ENCODE measurements at regions of chr10 and their contacts with region 1.

Region 1: DNA sequence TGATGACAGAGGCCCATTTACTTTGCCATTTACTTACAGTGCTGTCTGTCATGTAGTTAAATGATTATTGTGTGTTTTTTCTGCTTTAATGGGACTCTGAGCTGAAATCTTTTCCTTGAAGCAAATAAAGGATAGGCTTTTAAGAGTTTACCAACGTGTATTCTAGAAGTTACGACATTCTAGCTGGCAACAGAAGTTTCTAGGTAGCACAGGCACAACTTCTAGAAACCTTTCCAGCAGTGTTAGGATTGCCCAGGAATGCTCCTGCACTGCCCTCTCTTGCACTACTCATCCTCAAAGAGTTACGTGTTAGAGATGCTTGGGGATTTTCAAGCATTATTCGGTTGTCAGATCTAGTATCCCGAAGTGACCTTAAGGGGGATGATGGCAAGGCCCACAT is 42.5 kb upstream of the TMEM236 start:
- DNase-seq: no peak
- H3K4me3 ChIP-seq: no peak overlapping the region
- CTCF ChIP-seq: no peak

Region 2: GRCh38 chr10:17038627-17039026 is 670.9 kb before region 1 on chr10:
- in situ Hi-C with region 1: no loop called
- DNase-seq: no peak
- H3K4me3 ChIP-seq: no peak overlapping the region
- CTCF ChIP-seq: no peak

Region 3: DNA sequence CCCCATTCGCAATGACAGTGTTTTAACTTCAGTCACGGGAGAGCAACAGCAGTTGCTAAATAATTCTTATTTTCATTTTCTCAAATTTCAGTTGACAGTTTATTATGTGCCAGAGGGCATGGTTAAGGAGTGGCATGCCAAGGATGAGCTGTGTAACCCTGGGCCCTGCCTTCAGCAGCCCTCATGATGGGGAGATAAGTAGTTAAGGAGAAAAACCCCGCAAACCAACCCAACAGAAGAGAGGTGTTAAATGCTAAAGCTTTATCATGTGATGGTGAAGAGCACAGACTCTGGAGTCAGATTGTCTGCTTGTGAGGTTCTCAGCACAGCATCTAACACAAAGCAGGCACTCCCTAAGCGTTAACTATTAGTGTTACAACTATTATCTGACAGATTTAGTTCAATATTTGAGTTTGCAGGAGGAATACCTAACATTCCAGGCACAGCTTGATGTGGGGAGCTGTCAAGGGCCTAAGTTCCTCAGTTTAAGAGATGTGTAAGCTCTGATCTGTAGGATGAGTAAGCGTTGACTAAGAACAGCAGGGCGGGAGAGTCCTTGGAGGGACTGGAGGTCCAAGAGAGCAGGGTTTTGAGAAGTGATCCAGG is 35.9 kb before region 1 on chr10:
- in situ Hi-C with region 1: loop called (anchors 5 kb)
- DNase-seq: peak; percentile 90
- H3K4me3 ChIP-seq: no peak overlapping the region
- CTCF ChIP-seq: no peak

Region 4: DNA sequence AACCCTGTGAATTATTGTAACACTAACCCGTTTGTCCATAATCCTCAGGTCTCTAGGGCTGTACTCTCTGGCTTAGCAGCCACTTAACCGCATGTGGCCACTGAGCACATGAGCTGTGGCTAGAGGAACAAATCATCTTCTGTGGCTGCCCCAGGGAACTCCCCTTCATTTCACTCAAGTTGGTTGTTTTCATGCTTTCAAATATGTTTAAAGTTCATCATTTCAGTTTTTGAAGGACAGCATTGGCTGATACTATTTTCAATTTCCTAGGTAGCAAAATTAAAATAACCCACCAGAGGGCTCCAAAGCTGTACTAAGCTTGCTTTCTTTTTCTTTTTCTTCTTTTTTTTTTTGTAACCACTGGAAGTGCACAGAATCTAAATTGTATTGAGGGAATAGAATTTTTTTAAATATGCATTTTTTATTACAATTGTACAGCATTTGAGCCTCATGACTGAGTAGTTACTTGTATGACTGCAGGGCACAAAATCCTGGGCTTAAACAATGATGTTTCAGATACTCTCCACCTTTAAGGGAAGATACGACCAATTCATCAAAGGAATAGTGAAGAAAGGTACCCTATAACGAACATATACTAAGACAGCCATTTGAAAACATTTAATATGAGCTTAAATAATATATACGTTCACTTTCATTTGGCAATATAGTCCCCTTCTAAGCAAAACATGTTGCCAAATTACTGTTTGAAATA is 138.2 kb after region 1 on chr10:
- in situ Hi-C with region 1: no loop called
- DNase-seq: peak; percentile 13
- H3K4me3 ChIP-seq: no peak overlapping the region
- CTCF ChIP-seq: peak; percentile 36

Region 5: DNA sequence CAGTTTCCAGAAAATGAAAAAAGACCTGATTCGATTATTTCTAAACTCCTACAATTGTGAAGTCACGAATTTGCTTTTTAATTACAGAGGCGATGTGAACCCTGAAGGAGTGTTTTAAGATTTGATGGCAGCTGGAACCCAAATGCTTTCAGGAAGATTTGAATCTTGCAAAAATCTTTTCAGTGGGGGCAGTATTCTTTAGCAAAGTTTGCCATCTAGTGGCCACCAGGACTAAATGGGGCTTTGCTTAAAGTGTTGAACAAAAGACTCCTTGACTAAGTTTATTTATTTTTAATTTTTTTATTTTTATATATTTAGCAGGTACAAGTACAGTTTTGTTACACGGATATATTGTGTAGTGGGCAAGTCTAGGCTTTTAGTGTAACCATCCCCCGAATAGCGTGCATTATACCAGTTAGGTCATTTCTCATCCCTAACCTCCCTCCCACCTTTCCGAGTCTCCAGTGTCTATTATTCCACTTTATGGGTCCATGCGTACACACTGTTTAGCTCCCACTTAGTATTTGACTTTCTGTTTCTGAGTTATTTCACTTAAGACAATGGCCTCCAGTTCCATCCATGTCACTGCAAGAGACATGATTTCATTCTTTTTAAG is 529.5 kb after region 1 on chr10:
- in situ Hi-C with region 1: no loop called
- DNase-seq: peak; percentile 49
- H3K4me3 ChIP-seq: no peak overlapping the region
- CTCF ChIP-seq: peak; percentile 76

Measured in astrocyte of the cerebellum (primary cell).